Activated T-helper 2 cell treated with anti-CD3 and anti-CD28 coated beads, Interferon-gamma antibody, Interleukin-2, Interleukin-4, amounts not matched to agents 10 μg/mL and 5 μg/mL and 100 μg/mL, durations not matched to agents 14 hours and 24 hours and 36 hours (primary cell): ENCODE measurements at regions of chr3 and their contacts with region 1.

Region 1: GRCh38 chr3:184185461-184186308 is at the start of gene ABCF3:
- DNase-seq: peak; percentile 99
- H3K4me3 Mint-ChIP-seq: peak within 1 kb of the TSS; percentile 94
- H3K27ac Mint-ChIP-seq: peak within 1 kb of the TSS; percentile 93
- H3K4me1 Mint-ChIP-seq: peaks cover 18% of the 10 kb centered on the region
- H3K27me3 Mint-ChIP-seq: no peaks in the 10 kb centered on the region
- total RNA-seq, gene ABCF3: 68.2 and 73.4 TPM in 2 replicates

Region 2: GRCh38 chr3:184154885-184155643 is 30.6 kb before region 1 on chr3 and contains the start of gene DVL3:
- intact Hi-C with region 1: loop called (anchors 1 kb)
- DNase-seq: peak; percentile 49
- H3K4me3 Mint-ChIP-seq: peak within 1 kb of the TSS; percentile 96
- H3K27ac Mint-ChIP-seq: peak within 1 kb of the TSS; percentile 79
- H3K4me1 Mint-ChIP-seq: peaks cover 16% of the 10 kb centered on the region
- H3K27me3 Mint-ChIP-seq: no peaks in the 10 kb centered on the region
- total RNA-seq, gene DVL3: 53.8 and 56.1 TPM in 2 replicates